A673 (cell line): ENCODE measurements at regions of chr1 and their contacts with region 1.

Region 1: GRCh38 chr1:212224102-212224501 is 61.1 kb upstream of the PPP2R5A start:
- DNase-seq: no peak
- H3K4me3 ChIP-seq: no peak overlapping the region
- H3K27ac ChIP-seq: no peak overlapping the region
- H3K4me1 ChIP-seq: no peaks in the 10 kb centered on the region
- H3K27me3 ChIP-seq: no peaks in the 10 kb centered on the region
- CTCF ChIP-seq: no peak

Region 2: DNA sequence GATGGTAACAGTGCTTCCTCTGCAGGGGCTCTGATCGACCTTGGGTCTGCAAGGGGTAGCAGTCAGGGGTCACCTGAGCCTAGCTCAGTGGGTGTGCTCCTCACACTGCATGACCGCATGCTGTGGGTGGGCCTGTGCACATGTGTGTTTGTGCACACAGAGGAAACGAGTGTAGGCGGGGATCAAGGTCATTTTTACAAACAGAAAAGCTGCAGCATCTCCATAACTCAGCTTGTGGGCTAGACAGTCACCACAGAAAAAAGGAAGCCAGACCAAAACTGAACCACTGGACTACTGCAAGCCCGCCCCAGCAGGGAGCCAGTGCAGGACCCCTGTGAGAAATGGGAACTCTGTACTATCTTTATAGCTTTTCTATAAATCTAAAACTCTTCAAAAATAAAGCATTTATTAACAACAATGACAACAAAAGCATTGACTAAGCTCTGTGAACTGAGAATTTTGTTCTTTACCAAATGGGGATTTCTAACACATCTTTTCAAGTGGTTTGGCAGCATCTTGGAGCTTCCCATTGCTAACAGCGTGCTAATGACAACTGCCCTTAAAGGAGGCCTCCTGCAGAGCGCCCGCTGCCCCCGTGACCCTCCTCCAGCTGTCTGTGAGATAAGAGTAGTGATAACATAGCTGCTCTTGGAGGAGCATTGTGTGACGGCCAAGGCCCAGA is 528.8 kb before region 1 on chr1:
- CTCF ChIA-PET with region 1: no interaction called
- POLR2A ChIA-PET with region 1: no interaction called
- intact Hi-C with region 1: no loop called
- DNase-seq: no peak
- H3K4me3 ChIP-seq: no peak overlapping the region
- H3K27ac ChIP-seq: no peak overlapping the region
- H3K4me1 ChIP-seq: peaks cover 15% of the 10 kb centered on the region
- H3K27me3 ChIP-seq: no peaks in the 10 kb centered on the region
- CTCF ChIP-seq: no peak

Region 3: GRCh38 chr1:212234431-212235395 is 10.6 kb after region 1 on chr1:
- CTCF ChIA-PET with region 1: no interaction called
- POLR2A ChIA-PET with region 1: no interaction called
- intact Hi-C with region 1: loop called (anchors 1 kb)
- DNase-seq: peak; percentile 63
- H3K4me3 ChIP-seq: no peak overlapping the region
- H3K27ac ChIP-seq: no peak overlapping the region
- H3K4me1 ChIP-seq: no peaks in the 10 kb centered on the region
- H3K27me3 ChIP-seq: no peaks in the 10 kb centered on the region
- CTCF ChIP-seq: no peak